B cell (primary cell): ENCODE measurements at regions of chr18 and their contacts with region 1.

Region 1: GRCh38 chr18:32714571-32715148 is 58.2 kb downstream of the KLHL14 start:
- DNase-seq: peak; percentile 83
- ATAC-seq: peak; percentile 97
- H3K4me3 ChIP-seq: no peak overlapping the region
- H3K4me3 Mint-ChIP-seq: no peak overlapping the region
- H3K27ac ChIP-seq: peak overlapping the region in 1 of 2 donors; percentile 45
- H3K27ac Mint-ChIP-seq: peak overlapping the region; percentile 62
- H3K4me1 ChIP-seq: peaks cover 7 to 9% of the 10 kb centered on the region in 2 donors
- H3K4me1 Mint-ChIP-seq: peaks cover 10% of the 10 kb centered on the region
- H3K27me3 ChIP-seq: no peaks in the 10 kb centered on the region
- H3K27me3 Mint-ChIP-seq: no peaks in the 10 kb centered on the region
- CTCF ChIP-seq: peak; percentile 83

Region 2: DNA sequence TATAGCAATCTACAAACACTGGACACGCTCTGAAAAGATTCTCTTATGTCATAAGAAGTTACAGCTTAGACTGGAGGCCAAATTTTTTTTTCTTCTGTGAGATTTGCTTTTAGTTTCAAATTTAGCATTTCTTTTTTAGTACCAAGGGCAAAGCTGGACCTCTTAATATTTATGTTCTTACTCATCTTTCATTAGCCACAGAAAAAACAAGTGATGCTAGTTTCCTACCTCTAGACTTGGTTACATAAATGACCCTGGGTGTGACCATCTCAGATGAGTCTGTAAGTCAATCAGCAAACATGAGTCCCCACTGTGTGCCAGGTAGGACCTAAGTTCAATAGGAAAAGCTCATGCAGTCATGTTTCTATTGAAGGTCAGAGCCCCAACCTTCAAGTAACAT is 430.4 kb before region 1 on chr18:
- CTCF ChIA-PET with region 1: no interaction called
- POLR2A ChIA-PET with region 1: no interaction called
- intact Hi-C with region 1: no loop called
- DNase-seq: no peak
- ATAC-seq: no peak
- H3K4me3 ChIP-seq: no peak overlapping the region
- H3K4me3 Mint-ChIP-seq: no peak overlapping the region
- H3K27ac ChIP-seq: no peak overlapping the region
- H3K27ac Mint-ChIP-seq: no peak overlapping the region
- H3K4me1 ChIP-seq: no peaks in the 10 kb centered on the region
- H3K4me1 Mint-ChIP-seq: no peaks in the 10 kb centered on the region
- H3K27me3 ChIP-seq: peaks cover 0 to 3% (median 0%) of the 10 kb centered on the region in 4 experiments
- H3K27me3 Mint-ChIP-seq: peaks cover 6% of the 10 kb centered on the region
- CTCF ChIP-seq: no peak

Region 3: DNA sequence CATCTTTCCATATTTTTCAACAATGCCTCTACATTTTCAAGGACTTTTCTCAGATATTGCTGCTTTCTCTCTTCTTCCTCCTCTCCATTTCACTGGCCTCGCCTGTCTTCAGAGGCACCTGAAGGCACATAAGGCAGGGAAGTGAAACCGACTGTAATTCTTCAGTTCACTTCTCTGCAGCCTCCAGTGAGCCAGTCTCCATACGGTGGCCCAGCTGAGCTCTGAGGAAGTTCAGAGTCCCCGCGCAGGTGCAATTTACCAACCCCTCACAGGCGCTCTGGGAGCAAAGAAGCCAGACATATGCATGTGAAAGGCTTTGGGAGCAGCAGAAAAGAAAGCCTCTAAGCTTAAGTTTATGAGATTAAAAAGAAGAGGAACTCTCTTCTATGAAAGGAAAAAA is 45.7 kb after region 1 on chr18:
- CTCF ChIA-PET with region 1: interaction called, 8 read pairs
- POLR2A ChIA-PET with region 1: interaction called, 4 read pairs
- intact Hi-C with region 1: loop called (anchors 2 kb)
- DNase-seq: peak; percentile 91
- ATAC-seq: peak; percentile 99
- H3K4me3 ChIP-seq: peak overlapping the region in 2 of 5 experiments; percentile 20 to 34
- H3K4me3 Mint-ChIP-seq: peak overlapping the region; percentile 52
- H3K27ac ChIP-seq: peak overlapping the region; percentile 76 to 81
- H3K27ac Mint-ChIP-seq: peak overlapping the region; percentile 81
- H3K4me1 ChIP-seq: peaks cover 60 to 91% of the 10 kb centered on the region in 2 donors
- H3K4me1 Mint-ChIP-seq: peaks cover 84% of the 10 kb centered on the region
- H3K27me3 ChIP-seq: no peaks in the 10 kb centered on the region
- H3K27me3 Mint-ChIP-seq: no peaks in the 10 kb centered on the region
- CTCF ChIP-seq: no peak

Region 4: DNA sequence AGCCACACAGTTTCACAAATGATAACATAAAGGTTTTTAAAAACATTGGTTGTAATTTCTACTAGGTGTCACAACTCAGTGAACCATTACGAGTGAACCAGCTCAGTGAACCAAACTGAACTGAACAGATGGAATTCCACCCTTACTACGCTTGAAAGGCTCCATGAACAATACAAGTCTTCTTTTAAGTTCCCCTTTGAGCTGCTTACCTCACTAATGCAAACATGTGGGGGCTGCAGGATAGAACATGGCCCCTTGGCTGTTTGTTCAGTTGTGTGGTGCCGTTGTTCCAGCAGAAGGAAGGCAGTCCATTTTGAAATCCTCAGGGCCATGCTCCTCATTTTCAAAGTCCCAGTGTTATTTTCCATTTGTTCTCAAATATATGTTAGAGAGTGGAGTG is 88.9 kb after region 1 on chr18:
- CTCF ChIA-PET with region 1: interaction called, 23 read pairs
- POLR2A ChIA-PET with region 1: no interaction called
- intact Hi-C with region 1: loop called (anchors 1 kb)
- DNase-seq: peak; percentile 84
- ATAC-seq: peak; percentile 91
- H3K4me3 ChIP-seq: peak overlapping the region in 2 of 5 experiments; percentile 37 to 43
- H3K4me3 Mint-ChIP-seq: peak overlapping the region; percentile 80
- H3K27ac ChIP-seq: peak overlapping the region; percentile 88 to 91
- H3K27ac Mint-ChIP-seq: peak overlapping the region; percentile 96
- H3K4me1 ChIP-seq: peaks cover 43 to 46% of the 10 kb centered on the region in 2 donors
- H3K4me1 Mint-ChIP-seq: peaks cover 53% of the 10 kb centered on the region
- H3K27me3 ChIP-seq: no peaks in the 10 kb centered on the region
- H3K27me3 Mint-ChIP-seq: no peaks in the 10 kb centered on the region
- CTCF ChIP-seq: no peak

Region 5: GRCh38 chr18:32910694-32911296 is 196.1 kb after region 1 on chr18:
- CTCF ChIA-PET with region 1: interaction called, 13 read pairs
- POLR2A ChIA-PET with region 1: no interaction called
- intact Hi-C with region 1: no loop called
- DNase-seq: no peak
- ATAC-seq: no peak
- H3K4me3 ChIP-seq: no peak overlapping the region
- H3K4me3 Mint-ChIP-seq: no peak overlapping the region
- H3K27ac ChIP-seq: no peak overlapping the region
- H3K27ac Mint-ChIP-seq: no peak overlapping the region
- H3K4me1 ChIP-seq: peaks cover 36 to 46% of the 10 kb centered on the region in 2 donors
- H3K4me1 Mint-ChIP-seq: peaks cover 49% of the 10 kb centered on the region
- H3K27me3 ChIP-seq: no peaks in the 10 kb centered on the region
- H3K27me3 Mint-ChIP-seq: no peaks in the 10 kb centered on the region
- CTCF ChIP-seq: no peak

Region 6: DNA sequence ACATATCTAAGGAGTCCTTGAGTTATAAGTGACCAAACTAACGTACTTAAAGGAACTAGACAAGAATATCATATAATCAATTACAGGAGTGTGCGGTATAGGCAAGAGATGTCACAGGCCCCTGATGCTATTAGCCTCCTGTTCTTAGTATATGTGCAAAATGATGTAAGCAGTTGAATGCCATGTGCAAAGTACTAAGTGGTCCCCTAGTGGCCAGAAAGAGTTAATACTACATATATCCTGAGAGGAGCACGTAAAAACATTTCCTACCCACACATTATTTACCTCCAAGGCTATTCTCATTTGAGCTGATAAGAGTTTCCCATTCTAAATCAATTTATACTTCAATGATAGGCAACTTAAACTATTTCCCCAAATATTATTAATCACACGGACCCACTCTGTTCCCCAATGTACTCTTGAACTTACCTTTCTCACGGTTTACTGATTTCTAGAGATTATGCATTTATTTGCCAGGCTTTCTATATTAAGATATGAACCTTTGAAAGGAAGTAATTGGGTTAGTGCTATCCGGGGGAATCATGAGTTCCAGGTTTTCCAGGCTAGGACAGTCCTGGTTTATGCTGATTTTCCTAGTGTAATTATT is 216.1 kb after region 1 on chr18:
- CTCF ChIA-PET with region 1: interaction called, 51 read pairs
- POLR2A ChIA-PET with region 1: no interaction called
- intact Hi-C with region 1: loop called (anchors 1 kb)
- DNase-seq: peak; percentile 65
- ATAC-seq: peak; percentile 97
- H3K4me3 ChIP-seq: no peak overlapping the region
- H3K4me3 Mint-ChIP-seq: no peak overlapping the region
- H3K27ac ChIP-seq: no peak overlapping the region
- H3K27ac Mint-ChIP-seq: no peak overlapping the region
- H3K4me1 ChIP-seq: no peaks in the 10 kb centered on the region
- H3K4me1 Mint-ChIP-seq: peaks cover 2% of the 10 kb centered on the region
- H3K27me3 ChIP-seq: peaks cover 0 to 4% (median under 1%) of the 10 kb centered on the region in 4 experiments
- H3K27me3 Mint-ChIP-seq: no peaks in the 10 kb centered on the region
- CTCF ChIP-seq: peak; percentile 80

Region 7: DNA sequence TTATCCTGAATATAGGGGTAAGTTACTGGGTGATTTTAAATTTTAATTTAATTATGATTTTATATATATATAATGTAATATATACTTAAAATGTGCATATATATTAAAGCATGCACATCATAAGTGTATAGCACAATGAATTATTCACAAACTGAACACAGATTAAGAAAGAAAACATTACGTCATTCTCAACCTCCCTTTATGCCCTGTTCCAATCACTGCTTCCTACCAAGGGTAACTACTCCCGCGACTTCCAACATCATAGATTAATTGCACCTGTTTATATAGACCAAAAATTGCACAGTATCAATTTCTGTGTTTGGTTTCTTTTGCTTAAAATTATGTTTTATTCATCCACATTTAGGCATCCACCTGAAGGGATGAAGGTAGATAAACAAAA is 359.5 kb after region 1 on chr18:
- CTCF ChIA-PET with region 1: no interaction called
- POLR2A ChIA-PET with region 1: no interaction called
- intact Hi-C with region 1: no loop called
- DNase-seq: no peak
- ATAC-seq: no peak
- H3K4me3 ChIP-seq: no peak overlapping the region
- H3K4me3 Mint-ChIP-seq: no peak overlapping the region
- H3K27ac ChIP-seq: no peak overlapping the region
- H3K27ac Mint-ChIP-seq: no peak overlapping the region
- H3K4me1 ChIP-seq: no peaks in the 10 kb centered on the region
- H3K4me1 Mint-ChIP-seq: no peaks in the 10 kb centered on the region
- H3K27me3 ChIP-seq: no peaks in the 10 kb centered on the region
- H3K27me3 Mint-ChIP-seq: peaks cover 11% of the 10 kb centered on the region
- CTCF ChIP-seq: no peak

Region 8: DNA sequence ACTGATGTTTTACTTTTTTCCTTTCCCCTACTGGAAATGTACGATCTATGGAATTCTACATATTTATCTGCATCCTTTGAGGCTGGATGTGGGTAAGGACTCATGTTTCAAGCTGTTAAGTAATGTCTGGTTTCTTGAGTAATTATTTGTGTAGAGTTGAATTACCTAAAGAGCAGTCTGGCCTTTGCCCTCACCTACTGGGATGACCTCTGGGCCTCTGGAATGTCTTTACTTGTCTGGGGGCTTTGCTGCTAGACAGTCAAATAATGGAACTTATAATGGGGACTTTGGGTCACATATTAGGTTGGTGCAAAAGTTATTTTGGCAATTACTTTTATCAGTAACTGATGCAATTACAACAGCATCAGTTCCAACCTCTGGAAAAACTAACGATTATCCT is 481.1 kb after region 1 on chr18:
- CTCF ChIA-PET with region 1: no interaction called
- POLR2A ChIA-PET with region 1: no interaction called
- intact Hi-C with region 1: no loop called
- DNase-seq: no peak
- ATAC-seq: no peak
- H3K4me3 ChIP-seq: no peak overlapping the region
- H3K4me3 Mint-ChIP-seq: no peak overlapping the region
- H3K27ac ChIP-seq: no peak overlapping the region
- H3K27ac Mint-ChIP-seq: no peak overlapping the region
- H3K4me1 ChIP-seq: no peaks in the 10 kb centered on the region
- H3K4me1 Mint-ChIP-seq: no peaks in the 10 kb centered on the region
- H3K27me3 ChIP-seq: no peaks in the 10 kb centered on the region
- H3K27me3 Mint-ChIP-seq: peaks cover 3% of the 10 kb centered on the region
- CTCF ChIP-seq: no peak